ENCODE measurements at regions of chr22 and their contacts with region 1.

Region 1: GRCh38 chr22:19909350-19910179 is 32.0 kb upstream of the COMT start:
- DNase-seq: peak; percentile 93
- ATAC-seq: peak; percentile 93
- H3K4me3 Mint-ChIP-seq: no peak overlapping the region
- H3K27ac Mint-ChIP-seq: peak overlapping the region; percentile 73
- H3K4me1 Mint-ChIP-seq: peaks cover 8% of the 10 kb centered on the region
- H3K27me3 Mint-ChIP-seq: no peaks in the 10 kb centered on the region
- CTCF ChIP-seq: peak; percentile 77

Region 2: GRCh38 chr22:19723983-19724827 is 185.4 kb before region 1 on chr22:
- CTCF ChIA-PET with region 1: interaction called, 144 read pairs
- POLR2A ChIA-PET with region 1: no interaction called
- intact Hi-C with region 1: loop called (anchors 2 kb)
- DNase-seq: peak; percentile 53
- ATAC-seq: peak; percentile 85
- H3K4me3 Mint-ChIP-seq: no peak overlapping the region
- H3K27ac Mint-ChIP-seq: no peak overlapping the region
- H3K4me1 Mint-ChIP-seq: peaks cover 10% of the 10 kb centered on the region
- H3K27me3 Mint-ChIP-seq: peaks cover 31% of the 10 kb centered on the region
- CTCF ChIP-seq: peak; percentile 67

Region 3: GRCh38 chr22:19832476-19833108 is 77.0 kb before region 1 on chr22:
- CTCF ChIA-PET with region 1: interaction called, 13 read pairs
- POLR2A ChIA-PET with region 1: no interaction called
- intact Hi-C with region 1: no loop called
- DNase-seq: no peak
- ATAC-seq: no peak
- H3K4me3 Mint-ChIP-seq: no peak overlapping the region
- H3K27ac Mint-ChIP-seq: no peak overlapping the region
- H3K4me1 Mint-ChIP-seq: peaks cover 24% of the 10 kb centered on the region
- H3K27me3 Mint-ChIP-seq: no peaks in the 10 kb centered on the region
- CTCF ChIP-seq: no peak

Region 4: GRCh38 chr22:19896665-19897355 is 12.8 kb before region 1 on chr22:
- CTCF ChIA-PET with region 1: interaction called, 14 read pairs
- POLR2A ChIA-PET with region 1: interaction called, 5 read pairs
- intact Hi-C with region 1: no loop called
- DNase-seq: peak; percentile 70
- ATAC-seq: peak; percentile 40
- H3K4me3 Mint-ChIP-seq: no peak overlapping the region
- H3K27ac Mint-ChIP-seq: peak overlapping the region; percentile 55
- H3K4me1 Mint-ChIP-seq: peaks cover 51% of the 10 kb centered on the region
- H3K27me3 Mint-ChIP-seq: no peaks in the 10 kb centered on the region
- CTCF ChIP-seq: no peak

Region 5: DNA sequence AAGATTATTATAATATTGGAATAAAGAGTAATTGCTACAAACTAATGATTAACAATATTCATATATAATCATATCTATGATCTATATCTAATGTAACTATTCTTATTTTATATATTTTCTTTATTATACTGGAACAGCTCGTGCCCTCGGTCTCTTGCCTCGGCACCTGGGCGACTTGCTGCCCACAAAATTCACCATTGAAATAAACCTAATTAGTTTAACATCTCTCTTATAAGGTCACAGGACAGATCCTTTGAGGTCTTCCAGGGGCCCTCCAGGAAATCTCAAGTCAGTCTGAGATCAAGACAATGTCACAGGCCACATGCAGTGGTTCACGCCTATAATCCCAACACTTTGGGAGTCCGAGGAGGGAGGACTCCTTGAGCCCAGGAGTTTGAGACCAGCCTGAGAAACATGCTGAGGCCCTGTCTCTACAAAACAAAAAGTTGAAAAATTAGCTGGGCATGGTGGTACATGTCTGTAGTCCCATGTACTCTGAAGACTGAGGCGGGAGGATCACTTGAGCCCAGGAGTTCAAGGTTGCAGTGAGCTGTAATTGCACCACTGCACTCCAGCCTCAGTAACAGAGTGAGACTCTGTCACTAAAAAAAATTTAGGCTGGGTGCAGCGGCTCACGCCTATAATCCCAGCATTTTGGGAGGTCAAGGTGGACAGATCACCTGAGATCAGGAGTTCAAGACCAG is 38.6 kb after region 1 on chr22:
- CTCF ChIA-PET with region 1: interaction called, 12 read pairs
- POLR2A ChIA-PET with region 1: no interaction called
- intact Hi-C with region 1: no loop called
- DNase-seq: no peak
- ATAC-seq: no peak
- H3K4me3 Mint-ChIP-seq: no peak overlapping the region
- H3K27ac Mint-ChIP-seq: no peak overlapping the region
- H3K4me1 Mint-ChIP-seq: peaks cover 28% of the 10 kb centered on the region
- H3K27me3 Mint-ChIP-seq: no peaks in the 10 kb centered on the region
- CTCF ChIP-seq: peak; percentile 7

Region 6: DNA sequence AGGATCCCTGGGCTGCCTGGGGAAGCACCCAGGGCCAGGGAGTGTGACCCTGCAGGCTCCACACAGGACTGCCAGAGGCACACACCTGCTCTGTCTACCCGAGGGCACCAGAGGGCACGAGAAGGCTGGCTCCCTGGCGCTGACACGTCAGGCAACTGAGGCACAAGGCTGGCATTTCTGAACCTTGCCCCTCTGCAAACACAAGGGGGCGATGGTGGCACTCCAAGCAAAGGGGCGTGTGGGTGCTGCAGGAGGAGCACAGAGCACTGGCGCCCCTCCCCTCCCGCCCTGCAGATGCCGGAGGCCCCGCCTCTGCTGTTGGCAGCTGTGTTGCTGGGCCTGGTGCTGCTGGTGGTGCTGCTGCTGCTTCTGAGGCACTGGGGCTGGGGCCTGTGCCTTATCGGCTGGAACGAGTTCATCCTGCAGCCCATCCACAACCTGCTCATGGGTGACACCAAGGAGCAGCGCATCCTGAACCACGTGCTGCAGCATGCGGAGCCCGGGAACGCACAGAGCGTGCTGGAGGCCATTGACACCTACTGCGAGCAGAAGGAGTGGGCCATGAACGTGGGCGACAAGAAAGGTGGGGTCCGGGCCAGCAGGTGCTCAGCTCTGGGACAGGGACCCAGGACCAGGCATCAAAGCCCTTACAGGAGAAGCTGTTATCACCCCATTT is 52.8 kb after region 1 on chr22:
- CTCF ChIA-PET with region 1: no interaction called
- POLR2A ChIA-PET with region 1: no interaction called
- intact Hi-C with region 1: no loop called
- DNase-seq: peak; percentile 85
- ATAC-seq: peak; percentile 93
- H3K4me3 Mint-ChIP-seq: no peak overlapping the region
- H3K27ac Mint-ChIP-seq: no peak overlapping the region
- H3K4me1 Mint-ChIP-seq: peaks cover 3% of the 10 kb centered on the region
- H3K27me3 Mint-ChIP-seq: no peaks in the 10 kb centered on the region
- CTCF ChIP-seq: peak; percentile 79

Measured in activated CD8-positive, alpha-beta T cell treated with anti-CD3 and anti-CD28 coated beads for 36 hours (primary cell).